CD4-positive, alpha-beta T cell (primary cell): ENCODE measurements at regions of chr12 and their contacts with region 1.

Region 1: DNA sequence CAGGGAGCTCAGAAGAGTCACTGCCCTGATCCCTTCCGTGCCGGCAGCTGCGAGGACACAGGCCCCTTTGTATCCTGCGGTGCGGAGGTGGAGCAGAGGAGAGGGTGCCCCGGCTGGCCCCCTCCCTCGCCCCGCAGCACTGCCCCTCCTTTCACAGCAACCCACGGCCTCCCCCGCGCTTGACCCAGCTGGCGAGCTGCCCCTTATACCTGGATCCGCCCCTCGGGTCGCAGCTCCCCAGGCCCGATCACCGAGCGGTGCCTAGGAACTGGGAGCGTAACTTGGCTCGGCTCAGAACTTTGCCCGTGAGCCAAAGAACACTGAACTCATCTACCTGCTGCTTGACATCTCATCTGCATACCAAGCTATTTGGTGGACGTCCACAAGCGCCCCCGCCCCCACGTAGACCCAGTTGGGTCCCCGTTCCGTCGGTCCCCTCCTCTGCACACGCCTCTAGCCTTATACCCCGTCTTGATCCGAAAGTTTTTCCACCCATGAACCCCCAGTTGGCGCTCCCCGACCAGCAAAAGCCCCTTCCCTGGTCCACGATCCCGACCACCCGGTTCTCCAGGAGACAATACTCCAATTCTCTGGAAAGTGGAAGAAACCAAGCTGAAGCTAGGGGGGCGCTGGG is 697 bp upstream of the DNAJC14 start:
- DNase-seq: peak in 11 of 14 experiments; percentile 4 to 54 (median 21)
- ATAC-seq: peak; percentile 23
- H3K4me3 ChIP-seq: peak overlapping the region; percentile 98
- H3K4me3 Mint-ChIP-seq: peak overlapping the region; percentile 100
- H3K27ac ChIP-seq: peak overlapping the region; percentile 52 to 70
- H3K27ac Mint-ChIP-seq: peak overlapping the region; percentile 88
- H3K4me1 ChIP-seq: peaks cover 58% of the 10 kb centered on the region
- H3K4me1 Mint-ChIP-seq: peaks cover 61% of the 10 kb centered on the region
- H3K27me3 ChIP-seq: no peaks in the 10 kb centered on the region
- H3K27me3 Mint-ChIP-seq: no peaks in the 10 kb centered on the region
- CTCF ChIP-seq: no peak

Region 2: GRCh38 chr12:55817346-55818139 is 12.5 kb before region 1 on chr12 and contains the starts of genes ORMDL2 and SARNP:
- CTCF ChIA-PET with region 1: interaction called, 7 read pairs
- POLR2A ChIA-PET with region 1: interaction called, 180 read pairs
- intact Hi-C with region 1: loop called (anchors 1 kb)
- DNase-seq: peak; percentile 88 to 100 (median 92)
- ATAC-seq: peak; percentile 92
- H3K4me3 ChIP-seq: peak within 1 kb of the TSS; percentile 97
- H3K4me3 Mint-ChIP-seq: no peak within 1 kb of the TSS
- H3K27ac ChIP-seq: peak within 1 kb of the TSS; percentile 71 to 87
- H3K27ac Mint-ChIP-seq: no peak within 1 kb of the TSS
- H3K4me1 ChIP-seq: peaks cover 40% of the 10 kb centered on the region
- H3K4me1 Mint-ChIP-seq: peaks cover 28% of the 10 kb centered on the region
- H3K27me3 ChIP-seq: no peaks in the 10 kb centered on the region
- H3K27me3 Mint-ChIP-seq: no peaks in the 10 kb centered on the region
- CTCF ChIP-seq: no peak
- total RNA-seq, gene ORMDL2: 13.0 to 14.9 TPM
- total RNA-seq, gene SARNP: 38.2 to 38.6 TPM

Region 3: DNA sequence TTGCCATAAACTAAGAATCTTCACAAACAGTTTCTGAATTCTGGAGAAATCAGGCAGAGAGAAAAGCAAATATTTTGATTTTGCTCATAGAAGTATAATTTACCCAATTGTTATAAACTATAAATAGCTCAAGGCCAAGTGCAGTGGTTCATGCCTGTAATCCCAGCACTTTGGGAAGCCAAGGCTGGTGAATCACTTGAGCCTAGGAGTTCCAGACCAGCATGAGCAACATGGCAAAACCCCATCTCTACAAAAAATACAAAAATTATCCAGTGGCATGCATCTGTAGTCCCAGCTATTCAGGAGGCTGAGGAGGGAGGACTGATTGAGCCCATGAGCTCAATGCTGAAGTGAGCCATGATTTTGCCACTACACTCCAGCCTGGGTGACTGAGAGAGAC is 32.2 kb after region 1 on chr12:
- CTCF ChIA-PET with region 1: no interaction called
- POLR2A ChIA-PET with region 1: no interaction called
- intact Hi-C with region 1: no loop called
- DNase-seq: no peak
- ATAC-seq: no peak
- H3K4me3 ChIP-seq: no peak overlapping the region
- H3K4me3 Mint-ChIP-seq: no peak overlapping the region
- H3K27ac ChIP-seq: no peak overlapping the region
- H3K27ac Mint-ChIP-seq: no peak overlapping the region
- H3K4me1 ChIP-seq: no peaks in the 10 kb centered on the region
- H3K4me1 Mint-ChIP-seq: no peaks in the 10 kb centered on the region
- H3K27me3 ChIP-seq: no peaks in the 10 kb centered on the region
- H3K27me3 Mint-ChIP-seq: no peaks in the 10 kb centered on the region
- CTCF ChIP-seq: no peak

Region 4: DNA sequence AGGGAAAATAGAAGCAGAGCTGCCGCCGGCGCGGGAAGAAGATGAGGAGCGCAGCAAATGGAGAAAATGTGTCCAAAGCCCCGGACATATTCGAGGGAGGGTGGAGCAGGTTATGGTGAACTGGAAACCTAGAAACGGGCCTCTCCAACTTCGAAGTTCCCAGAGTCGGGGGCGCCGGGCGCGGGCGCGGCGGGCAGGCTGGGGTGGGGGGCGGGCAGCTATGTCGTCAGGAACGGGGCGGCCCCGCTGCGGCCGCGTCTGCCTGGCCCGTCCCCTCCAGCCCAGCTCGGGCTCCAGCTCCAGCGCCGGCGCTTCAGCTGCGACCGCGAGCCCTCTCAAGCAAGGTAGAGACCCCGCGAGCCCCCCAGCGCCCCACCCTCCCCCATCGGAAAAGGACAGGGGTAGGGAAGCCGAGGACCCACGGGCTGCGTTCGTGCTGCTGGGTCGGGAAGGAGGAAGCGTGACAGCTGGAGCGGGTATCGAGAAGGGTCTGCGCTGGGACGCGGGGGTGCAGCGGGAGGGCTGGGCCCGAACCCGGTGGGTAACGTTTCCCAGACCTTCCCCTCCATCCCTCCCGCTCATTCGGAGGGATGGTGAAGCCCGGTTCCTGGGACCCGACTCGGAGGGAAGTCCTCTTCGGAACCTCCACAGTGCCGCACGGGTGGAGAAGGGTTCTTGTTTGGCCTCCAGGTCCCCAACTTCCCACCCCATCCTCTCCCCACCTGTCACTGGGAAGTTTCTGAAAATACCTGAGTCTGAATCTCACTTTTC is 101.9 kb after region 1 on chr12:
- CTCF ChIA-PET with region 1: interaction called, 12 read pairs
- POLR2A ChIA-PET with region 1: interaction called, 159 read pairs
- intact Hi-C with region 1: loop called (anchors 1 to 2 kb)
- DNase-seq: peak in 8 of 14 experiments; percentile 11 to 63 (median 52)
- ATAC-seq: no peak
- H3K4me3 ChIP-seq: peak overlapping the region; percentile 98
- H3K4me3 Mint-ChIP-seq: peak overlapping the region; percentile 99
- H3K27ac ChIP-seq: peak overlapping the region; percentile 83 to 93
- H3K27ac Mint-ChIP-seq: peak overlapping the region; percentile 97
- H3K4me1 ChIP-seq: peaks cover 68% of the 10 kb centered on the region
- H3K4me1 Mint-ChIP-seq: peaks cover 57% of the 10 kb centered on the region
- H3K27me3 ChIP-seq: no peaks in the 10 kb centered on the region
- H3K27me3 Mint-ChIP-seq: no peaks in the 10 kb centered on the region
- CTCF ChIP-seq: no peak

Region 5: DNA sequence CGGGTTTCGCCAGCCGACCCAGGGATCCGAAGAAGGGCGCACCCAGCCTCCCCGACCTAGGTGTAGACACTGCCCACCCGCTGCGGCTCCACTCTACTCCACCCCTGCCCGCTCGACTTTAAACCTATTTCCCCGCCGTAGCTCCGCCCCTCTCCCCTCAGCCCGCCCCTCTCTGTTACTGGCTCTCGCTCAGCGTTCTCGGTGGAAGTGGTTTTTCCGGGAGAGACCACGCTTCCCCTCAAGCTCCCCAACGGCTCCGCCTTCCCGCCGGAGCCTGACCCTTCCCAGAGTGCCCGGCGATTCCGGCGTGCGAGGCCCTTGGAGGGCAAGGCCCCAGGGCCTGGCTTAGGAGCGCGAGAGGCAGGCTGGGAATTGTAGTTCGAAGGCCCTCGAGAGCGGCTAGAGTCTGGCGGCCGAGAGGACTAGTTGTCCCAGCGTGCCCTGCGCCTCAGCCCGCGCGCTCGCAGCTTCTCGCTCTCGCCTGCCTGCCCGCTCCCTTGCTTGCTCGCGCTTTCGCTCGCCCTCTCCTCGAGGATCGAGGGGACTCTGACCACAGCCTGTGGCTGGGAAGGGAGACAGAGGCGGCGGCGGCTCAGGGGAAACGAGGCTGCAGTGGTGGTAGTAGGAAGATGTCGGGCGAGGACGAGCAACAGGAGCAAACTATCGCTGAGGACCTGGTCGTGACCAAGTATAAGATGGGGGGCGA is 274.2 kb after region 1 on chr12 and contains the start of gene PA2G4:
- CTCF ChIA-PET with region 1: no interaction called
- POLR2A ChIA-PET with region 1: interaction called, 10 read pairs
- intact Hi-C with region 1: loop called (anchors 1 to 10 kb)
- DNase-seq: peak; percentile 89 to 99 (median 96)
- ATAC-seq: peak; percentile 88
- H3K4me3 ChIP-seq: peak within 1 kb of the TSS; percentile 90
- H3K4me3 Mint-ChIP-seq: peak within 1 kb of the TSS; percentile 93
- H3K27ac ChIP-seq: peak within 1 kb of the TSS; percentile 63 to 95
- H3K27ac Mint-ChIP-seq: peak within 1 kb of the TSS; percentile 100
- H3K4me1 ChIP-seq: peaks cover 48% of the 10 kb centered on the region
- H3K4me1 Mint-ChIP-seq: peaks cover 67% of the 10 kb centered on the region
- H3K27me3 ChIP-seq: no peaks in the 10 kb centered on the region
- H3K27me3 Mint-ChIP-seq: no peaks in the 10 kb centered on the region
- CTCF ChIP-seq: no peak
- total RNA-seq, gene PA2G4: 51.0 to 61.0 TPM